Sigmoid colon (tissue), 7 donors: ENCODE measurements at regions of chr1 and their contacts with region 1.

Region 1: GRCh38 chr1:109667452-109668122 is at the start of gene GSTM2:
- DNase-seq: peak; percentile 97
- H3K4me3 ChIP-seq: peak within 1 kb of the TSS; percentile 55 to 66 (median 62)
- H3K27ac ChIP-seq: peak within 1 kb of the TSS; percentile 48 to 78 (median 70)
- H3K4me1 ChIP-seq: peaks cover 0 to 19% (median 9%) of the 10 kb centered on the region in 4 donors
- H3K27me3 ChIP-seq: no peaks in the 10 kb centered on the region
- CTCF ChIP-seq: no peak
- EP300 ChIP-seq: no peak
- POLR2A ChIP-seq: no peak
- total RNA-seq, gene GSTM2: 42.5 to 139 (median 60.5) TPM

Region 2: DNA sequence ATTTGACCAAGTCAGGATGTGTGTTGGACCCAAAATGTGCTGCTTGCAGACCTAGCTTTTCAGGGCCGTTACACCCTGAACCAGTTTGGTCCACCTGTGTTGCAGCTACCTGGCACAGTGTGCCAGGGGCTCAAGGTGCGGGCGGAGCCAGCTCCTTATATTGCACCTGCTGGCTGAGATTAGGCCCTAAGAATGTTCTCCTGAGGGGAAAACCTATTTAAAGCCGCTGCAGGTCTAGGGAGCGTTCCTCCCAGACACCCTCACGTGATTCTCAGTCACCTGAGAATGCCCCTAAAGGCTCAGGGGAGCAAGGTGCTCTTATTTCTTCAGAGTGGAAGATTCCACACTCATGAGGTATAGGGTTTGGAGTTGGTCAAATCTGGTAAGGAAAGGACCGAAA is 61.3 kb after region 1 on chr1:
- intact Hi-C with region 1: loop called (anchors 5 kb)
- DNase-seq: no peak
- H3K4me3 ChIP-seq: no peak overlapping the region
- H3K27ac ChIP-seq: no peak overlapping the region
- H3K4me1 ChIP-seq: peaks cover 0 to 4% (median 3%) of the 10 kb centered on the region in 4 donors
- H3K27me3 ChIP-seq: no peaks in the 10 kb centered on the region
- CTCF ChIP-seq: no peak
- EP300 ChIP-seq: no peak
- POLR2A ChIP-seq: no peak

Region 3: GRCh38 chr1:109739738-109740660 is 72.4 kb after region 1 on chr1:
- intact Hi-C with region 1: loop called (anchors 5 kb)
- DNase-seq: peak; percentile 90
- H3K4me3 ChIP-seq: peak overlapping the region; percentile 56 to 79 (median 73)
- H3K27ac ChIP-seq: peak overlapping the region; percentile 64 to 85 (median 82)
- H3K4me1 ChIP-seq: peaks cover 0 to 20% (median 14%) of the 10 kb centered on the region in 4 donors
- H3K27me3 ChIP-seq: no peaks in the 10 kb centered on the region
- CTCF ChIP-seq: no peak
- EP300 ChIP-seq: no peak
- POLR2A ChIP-seq: peak; percentile 63 to 87